H1 (cell line): ENCODE measurements at regions of chr19 and their contacts with region 1.

Region 1: DNA sequence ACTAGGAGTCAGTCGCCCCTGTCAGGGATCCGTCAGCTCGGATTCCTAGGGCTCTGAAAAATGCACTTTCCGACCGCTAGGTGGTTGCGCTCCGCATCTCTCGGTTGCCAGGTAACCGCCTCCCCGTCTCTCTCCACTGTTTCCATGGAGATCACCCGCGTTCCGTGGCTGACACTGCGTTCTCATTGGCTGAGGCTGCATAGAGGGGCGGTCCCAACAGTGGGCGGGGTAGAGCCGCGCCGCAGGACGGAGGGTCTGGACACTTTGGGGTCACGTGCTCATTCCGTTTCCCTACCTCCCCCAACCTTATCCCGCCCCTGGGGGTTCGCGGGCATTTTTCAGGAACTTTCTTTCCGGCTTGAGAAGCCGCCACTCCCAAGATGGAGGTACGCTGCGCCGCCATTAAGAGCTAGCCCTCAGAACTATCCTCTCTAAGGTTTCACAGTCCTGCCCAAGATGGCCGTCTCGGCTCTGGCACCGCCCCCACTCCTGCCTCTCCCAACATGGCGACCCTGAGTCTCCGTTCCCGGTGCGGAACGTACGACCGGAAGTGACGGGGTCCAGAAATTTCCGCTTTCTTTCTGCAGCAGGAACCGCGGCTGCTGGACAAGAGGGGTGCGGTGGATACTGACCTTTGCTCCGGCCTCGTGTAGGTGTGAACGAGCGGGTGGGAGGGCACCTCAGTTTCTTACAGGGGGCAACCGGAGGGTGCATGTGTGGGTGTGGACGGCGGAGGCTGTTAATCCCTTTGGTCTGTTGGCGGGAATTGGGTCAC is at the starts of genes ODAD3 and PRKCSH:
- DNase-seq: peak; percentile 98 to 99
- H3K4me3 ChIP-seq: peak within 1 kb of the TSS; percentile 86 to 99 (median 93)
- H3K27ac ChIP-seq: peak within 1 kb of the TSS; percentile 91
- H3K4me1 ChIP-seq: peaks cover 0 to 13% (median 7%) of the 10 kb centered on the region in 4 experiments; a peak in 5 of 7 replicates
- H3K27me3 ChIP-seq: no peaks in the 10 kb centered on the region
- CTCF ChIP-seq: peak; percentile 84 to 95 (median 86)
- EP300 ChIP-seq: peak in 1 of 2 experiments; percentile 51; a peak in 1 of 3 replicates
- POLR2A ChIP-seq: peak in 1 of 2 experiments; percentile 88; a peak in 2 of 3 replicates
- RAD21 ChIP-seq: peak; percentile 27 to 34; a peak in 2 of 4 replicates
- total RNA-seq, gene ODAD3: 1.6 and 2.2 TPM in 2 replicates
- total RNA-seq, gene PRKCSH: 337 and 341 TPM in 2 replicates

Region 2: DNA sequence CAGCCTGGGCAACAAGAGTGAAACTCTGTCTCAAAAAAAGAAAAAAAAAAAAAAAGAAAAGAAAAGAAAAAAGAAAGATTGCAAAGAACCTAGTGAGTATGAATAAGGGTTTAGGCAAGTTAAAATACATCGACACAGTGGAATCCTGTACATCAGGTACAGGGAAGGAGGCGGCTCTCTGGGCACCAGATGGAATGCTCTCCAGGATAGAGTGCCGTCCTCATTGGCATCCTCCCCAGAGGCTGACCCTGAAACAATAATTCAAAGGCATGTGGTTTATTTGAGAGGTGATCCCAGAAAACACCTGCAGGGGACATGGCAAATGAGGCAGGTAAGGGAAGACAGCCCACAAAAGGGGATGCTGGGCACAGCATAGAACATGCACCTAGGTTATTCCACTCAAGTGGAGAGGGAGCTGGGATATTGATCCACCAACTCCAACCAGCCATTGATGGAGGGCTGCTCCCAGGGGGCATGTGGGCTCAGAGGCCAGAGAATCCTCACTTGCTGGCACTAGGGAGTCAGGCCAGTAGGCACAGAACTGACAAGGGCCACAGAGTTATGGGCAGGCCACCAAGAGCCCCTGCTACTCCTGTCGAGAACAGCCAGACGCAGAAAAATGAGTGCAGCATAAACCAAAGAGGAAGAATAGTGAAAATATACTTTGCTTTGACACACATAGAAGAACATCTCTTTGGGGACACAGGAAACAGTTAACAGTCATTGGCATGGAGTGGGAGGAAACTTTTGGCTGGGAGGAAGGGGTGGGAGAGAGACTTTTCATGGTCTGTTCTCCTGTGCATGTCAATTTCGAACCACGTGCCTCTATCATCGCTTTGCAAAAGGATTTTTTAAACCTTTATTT is 135.1 kb before region 1 on chr19:
- CTCF ChIA-PET with region 1: no interaction called
- POLR2A ChIA-PET with region 1: no interaction called
- DNase-seq: no peak
- H3K4me3 ChIP-seq: no peak overlapping the region
- H3K27ac ChIP-seq: no peak overlapping the region
- H3K4me1 ChIP-seq: peaks cover 0 to 3% (median under 1%) of the 10 kb centered on the region in 4 experiments; a peak in 2 of 7 replicates
- H3K27me3 ChIP-seq: no peaks in the 10 kb centered on the region; a peak in 2 of 7 replicates
- CTCF ChIP-seq: no peak
- EP300 ChIP-seq: no peak
- POLR2A ChIP-seq: no peak
- RAD21 ChIP-seq: no peak

Region 3: DNA sequence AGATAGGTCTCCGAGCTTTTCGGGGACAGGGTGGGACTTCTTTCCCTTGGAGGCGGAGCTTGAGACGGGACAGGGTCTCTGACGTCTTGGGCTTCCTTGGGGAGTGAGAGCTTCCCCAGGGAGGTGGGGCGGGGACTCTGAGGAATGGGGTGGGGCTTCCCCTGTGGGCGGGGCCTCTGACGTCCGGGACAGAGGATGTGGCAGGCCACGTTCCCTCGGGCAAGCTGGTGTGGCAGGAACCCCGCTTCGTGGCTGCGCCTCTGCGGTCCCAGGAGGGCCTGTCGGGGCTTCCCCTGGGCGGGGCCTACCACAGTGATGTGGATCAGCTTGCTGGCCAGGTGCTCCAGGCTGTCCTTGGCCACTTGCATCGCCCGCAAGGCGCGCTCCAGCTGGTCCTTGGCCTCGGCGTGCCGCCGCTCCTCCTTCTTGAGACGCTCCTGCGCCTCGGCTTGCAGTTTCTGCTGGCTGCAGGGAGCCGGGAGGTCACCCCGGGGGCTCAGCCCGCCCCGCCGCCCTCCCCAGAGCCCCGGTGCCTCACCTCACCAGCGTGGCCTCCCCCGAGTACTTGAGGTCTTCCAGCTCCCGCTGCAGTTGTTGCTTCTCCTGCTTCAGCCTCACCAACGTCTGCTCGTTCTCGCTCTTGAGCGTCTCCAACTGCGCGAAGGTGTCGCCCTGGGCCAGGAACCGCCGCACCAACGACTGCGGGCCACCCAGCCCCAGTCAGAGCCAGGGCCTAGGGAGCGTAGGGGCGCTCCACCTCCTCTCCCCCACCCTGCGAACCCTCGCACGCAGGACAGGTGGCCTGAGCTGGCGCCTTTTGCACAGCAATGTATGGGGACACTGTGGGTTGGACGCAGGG is 12.9 kb before region 1 on chr19:
- CTCF ChIA-PET with region 1: interaction called, 15 read pairs
- POLR2A ChIA-PET with region 1: interaction called, 15 read pairs
- DNase-seq: peak; percentile 88 to 99
- H3K4me3 ChIP-seq: peak overlapping the region; percentile 37 to 76 (median 53)
- H3K27ac ChIP-seq: no peak overlapping the region
- H3K4me1 ChIP-seq: peaks cover 0 to 14% (median 12%) of the 10 kb centered on the region in 4 experiments; a peak in 5 of 7 replicates
- H3K27me3 ChIP-seq: peaks cover 2 to 28% (median 21%) of the 10 kb centered on the region in 4 experiments
- CTCF ChIP-seq: no peak
- EP300 ChIP-seq: no peak
- POLR2A ChIP-seq: peak in 1 of 2 experiments; percentile 60; a peak in 2 of 3 replicates
- RAD21 ChIP-seq: no peak

Region 4: DNA sequence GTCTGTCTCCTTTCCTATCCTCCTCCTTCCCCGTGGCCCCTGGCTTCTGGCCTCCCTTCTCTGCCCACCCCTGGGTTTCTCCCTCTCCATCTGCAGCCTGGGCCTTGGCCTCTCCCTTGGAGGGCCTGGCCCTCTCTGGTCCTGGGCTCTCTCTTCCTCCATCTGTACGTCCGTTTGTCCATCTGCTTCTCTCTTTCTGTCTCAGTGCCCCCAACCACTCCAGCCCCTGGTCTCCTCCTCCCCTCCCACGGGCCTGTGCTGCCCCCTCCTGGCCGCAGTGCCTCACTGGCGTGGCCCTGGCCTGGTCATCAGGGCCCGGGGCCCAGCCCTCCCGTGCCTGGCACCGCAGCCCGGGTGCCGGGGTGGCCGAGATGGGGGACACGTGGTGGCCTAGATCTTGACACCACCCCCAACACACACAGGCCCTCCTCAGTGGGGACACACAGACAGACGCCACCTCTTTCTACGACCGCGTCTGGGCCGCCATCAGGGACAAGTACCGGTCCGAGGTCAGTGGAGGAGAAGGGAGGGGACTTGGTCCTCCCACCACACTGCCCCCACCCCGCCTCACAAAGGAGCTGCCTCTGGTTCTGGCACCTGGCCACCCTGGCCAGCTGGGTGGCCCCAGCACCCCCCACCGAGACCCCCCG is 11.5 kb after region 1 on chr19:
- CTCF ChIA-PET with region 1: interaction called, 11 read pairs
- POLR2A ChIA-PET with region 1: interaction called, 14 read pairs
- DNase-seq: peak in 1 of 2 experiments; percentile 95
- H3K4me3 ChIP-seq: no peak overlapping the region
- H3K27ac ChIP-seq: no peak overlapping the region
- H3K4me1 ChIP-seq: peaks cover under 1 to 4% (median 2%) of the 10 kb centered on the region in 4 experiments; a peak in 6 of 7 replicates
- H3K27me3 ChIP-seq: no peaks in the 10 kb centered on the region
- CTCF ChIP-seq: peak; percentile 91 to 99 (median 91)
- EP300 ChIP-seq: no peak
- POLR2A ChIP-seq: no peak
- RAD21 ChIP-seq: peak; percentile 90 to 95

Region 5: DNA sequence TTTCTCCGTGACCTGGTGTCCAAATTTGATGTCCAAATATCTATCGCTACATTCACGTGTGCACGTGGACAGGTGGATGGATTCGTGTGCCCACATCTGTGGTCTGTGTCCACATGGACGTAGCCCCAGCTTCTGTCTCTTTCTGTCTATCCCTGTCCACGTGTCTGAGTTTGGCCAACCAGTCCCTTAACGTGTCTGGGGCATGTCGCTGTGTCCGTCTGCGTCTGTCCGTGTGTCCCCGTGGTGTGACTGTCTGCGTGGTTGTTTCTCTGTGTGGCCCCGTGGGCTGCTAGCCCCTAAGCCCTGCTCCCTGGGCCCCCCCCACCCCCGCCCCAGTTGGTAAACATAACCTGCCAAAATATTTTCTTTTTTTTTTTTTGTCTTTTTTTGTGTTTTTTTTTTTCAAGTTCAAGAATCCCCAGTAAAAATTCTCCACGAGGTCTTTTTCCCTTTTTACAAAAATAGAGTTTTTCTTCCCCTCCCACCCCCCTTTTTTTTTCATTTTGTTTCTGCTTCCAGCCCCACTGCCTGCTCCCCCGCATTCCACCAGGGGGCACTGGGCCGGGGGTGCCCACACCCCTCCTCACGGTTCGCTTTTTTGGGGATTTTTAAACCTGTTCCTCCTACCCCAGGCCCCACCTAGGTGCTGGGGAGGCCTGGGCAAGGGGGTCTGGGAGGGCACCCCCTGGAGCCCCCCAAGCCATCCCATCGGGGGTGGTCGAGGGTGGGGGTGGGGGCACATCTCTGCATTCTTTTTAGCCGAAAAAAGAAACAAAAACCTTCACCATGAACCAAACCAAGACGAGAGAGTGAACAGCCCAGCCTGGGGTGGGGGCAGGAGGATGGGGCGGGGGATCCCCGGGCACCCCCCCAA is 18.5 kb after region 1 on chr19:
- CTCF ChIA-PET with region 1: interaction called, 5 read pairs
- POLR2A ChIA-PET with region 1: interaction called, 14 read pairs
- DNase-seq: peak in 1 of 2 experiments; percentile 70
- H3K4me3 ChIP-seq: no peak overlapping the region
- H3K27ac ChIP-seq: no peak overlapping the region
- H3K4me1 ChIP-seq: peaks cover 2 to 21% (median 7%) of the 10 kb centered on the region in 4 experiments
- H3K27me3 ChIP-seq: no peaks in the 10 kb centered on the region
- CTCF ChIP-seq: peak; percentile 66 to 81 (median 69)
- EP300 ChIP-seq: no peak
- POLR2A ChIP-seq: no peak
- RAD21 ChIP-seq: peak; percentile 34 to 56; a peak in 3 of 4 replicates